Activated B cell treated with CpG ODN at 0.5 μM for 24 hours (primary cell): ENCODE measurements at regions of chr9 and their contacts with region 1.

Region 1: DNA sequence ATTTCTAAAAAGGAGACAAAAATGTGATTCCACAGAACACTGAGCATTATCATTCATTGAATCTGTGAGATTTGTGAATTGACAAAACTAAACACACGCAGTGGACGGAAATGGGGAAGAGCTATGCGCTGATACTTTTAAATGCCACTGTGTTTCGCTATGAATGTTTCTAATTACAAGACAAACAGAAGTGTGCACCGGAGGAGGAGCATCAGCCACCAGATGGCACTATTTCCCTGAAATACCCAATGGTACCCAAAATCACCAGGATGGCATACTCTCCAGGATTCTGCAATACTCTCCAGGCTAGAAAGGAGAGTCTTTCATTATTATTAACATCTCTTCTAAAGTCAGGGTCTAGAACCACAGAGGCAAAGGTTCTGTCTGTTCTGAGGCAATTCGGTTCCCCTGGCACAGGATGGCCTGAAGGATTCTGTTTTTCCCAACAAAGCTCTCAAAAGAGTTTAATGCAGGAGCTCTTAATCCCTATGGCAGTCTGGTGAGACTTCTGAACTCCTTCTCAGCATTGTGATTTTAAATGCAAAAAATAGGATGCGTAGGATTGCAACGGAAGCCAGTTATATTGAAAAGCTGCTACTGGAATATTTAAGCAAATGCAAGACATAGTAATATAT is 13.8 kb upstream of the PUM3 start:
- DNase-seq: no peak
- ATAC-seq: peak; percentile 88
- H3K4me3 Mint-ChIP-seq: no peak overlapping the region
- H3K27ac Mint-ChIP-seq: no peak overlapping the region
- H3K4me1 Mint-ChIP-seq: peaks cover 4% of the 10 kb centered on the region
- H3K27me3 Mint-ChIP-seq: peaks cover 34% of the 10 kb centered on the region
- CTCF ChIP-seq: no peak

Region 2: DNA sequence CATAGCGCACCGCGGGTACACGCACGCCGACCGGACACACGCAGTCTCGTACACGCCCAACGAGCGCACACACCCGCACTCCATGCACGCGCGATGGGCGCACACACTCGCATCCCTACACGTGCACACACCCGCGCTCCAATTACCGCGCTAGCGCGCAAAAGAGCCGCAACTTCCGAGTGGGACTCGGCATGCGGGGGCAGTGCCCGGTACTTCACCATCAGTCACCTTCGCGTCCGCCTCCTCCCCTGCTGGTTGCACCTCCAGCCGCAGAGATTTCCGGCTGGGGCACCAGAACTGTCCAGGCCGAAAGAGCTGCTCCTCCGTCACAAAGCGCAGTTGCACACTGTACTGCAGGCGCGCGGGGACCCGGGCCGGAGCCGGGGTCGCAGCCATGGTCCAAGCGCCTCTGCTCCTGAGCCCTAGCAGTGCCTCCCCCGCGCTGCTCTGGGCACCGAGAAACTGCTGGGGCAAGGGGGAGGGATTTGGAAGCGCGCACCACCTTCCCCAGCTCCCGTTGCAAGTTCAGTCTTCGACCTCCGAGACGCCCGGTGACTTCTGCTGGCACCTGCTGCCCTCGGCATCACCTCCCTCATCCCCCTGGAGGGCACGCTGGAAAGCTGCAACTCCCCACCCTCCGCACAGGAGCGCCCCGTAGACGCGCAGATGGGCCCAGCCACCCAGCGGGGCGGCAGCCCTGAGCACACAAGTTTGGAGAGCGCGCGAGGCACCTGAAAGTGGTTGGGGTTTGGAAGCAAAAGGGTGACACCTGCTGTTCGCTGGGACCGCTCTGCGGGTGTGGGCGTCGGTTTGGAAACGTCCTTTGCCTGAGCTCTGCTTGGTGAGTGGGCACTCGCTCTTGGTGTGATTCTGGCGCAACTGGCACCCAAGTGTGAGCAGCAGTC is 323.6 kb after region 1 on chr9:
- CTCF ChIA-PET with region 1: no interaction called
- POLR2A ChIA-PET with region 1: no interaction called
- intact Hi-C with region 1: loop called (anchors 2 kb)
- DNase-seq: no peak
- ATAC-seq: no peak
- H3K4me3 Mint-ChIP-seq: no peak overlapping the region
- H3K27ac Mint-ChIP-seq: no peak overlapping the region
- H3K4me1 Mint-ChIP-seq: peaks cover 5% of the 10 kb centered on the region
- H3K27me3 Mint-ChIP-seq: peaks cover 48% of the 10 kb centered on the region
- CTCF ChIP-seq: no peak

Region 3: DNA sequence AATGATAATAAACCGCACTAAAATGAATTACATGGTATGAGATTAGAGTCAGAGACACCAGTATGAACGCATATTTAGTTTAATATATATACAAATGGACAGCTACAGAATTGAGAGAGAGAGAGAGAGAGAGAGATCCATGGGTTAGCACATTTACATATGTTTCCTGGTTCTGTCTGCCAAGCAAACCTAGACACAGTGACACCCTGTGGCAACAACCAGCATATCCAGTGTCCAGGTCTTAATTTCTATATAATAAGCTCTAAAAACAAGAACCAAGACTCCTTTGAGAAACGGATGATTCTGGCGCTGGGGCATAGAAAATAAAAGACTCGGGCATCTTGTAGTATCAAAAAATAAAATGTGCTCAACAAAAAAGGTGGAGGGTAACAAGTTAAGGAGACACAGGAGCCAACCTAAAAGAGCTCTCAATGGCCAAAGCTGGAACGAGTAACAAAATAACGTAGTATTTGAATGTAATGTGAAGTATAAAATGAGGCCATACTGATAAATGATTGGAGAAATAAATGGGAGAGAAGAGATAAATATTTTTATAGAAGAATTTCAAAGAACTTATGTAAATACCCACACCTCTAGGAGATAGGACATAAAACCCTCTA is 583.6 kb after region 1 on chr9:
- CTCF ChIA-PET with region 1: interaction called, 4 read pairs
- POLR2A ChIA-PET with region 1: no interaction called
- intact Hi-C with region 1: loop called (anchors 1 kb)
- DNase-seq: no peak
- ATAC-seq: peak; percentile 92
- H3K4me3 Mint-ChIP-seq: no peak overlapping the region
- H3K27ac Mint-ChIP-seq: no peak overlapping the region
- H3K4me1 Mint-ChIP-seq: peaks cover 11% of the 10 kb centered on the region
- H3K27me3 Mint-ChIP-seq: no peaks in the 10 kb centered on the region
- CTCF ChIP-seq: no peak

Region 4: GRCh38 chr9:4228606-4229005 is 1370.9 kb after region 1 on chr9:
- CTCF ChIA-PET with region 1: no interaction called
- POLR2A ChIA-PET with region 1: no interaction called
- intact Hi-C with region 1: loop called (anchors 10 kb)
- DNase-seq: no peak
- ATAC-seq: no peak
- H3K4me3 Mint-ChIP-seq: no peak overlapping the region
- H3K27ac Mint-ChIP-seq: no peak overlapping the region
- H3K4me1 Mint-ChIP-seq: no peaks in the 10 kb centered on the region
- H3K27me3 Mint-ChIP-seq: no peaks in the 10 kb centered on the region
- CTCF ChIP-seq: no peak

Region 5: DNA sequence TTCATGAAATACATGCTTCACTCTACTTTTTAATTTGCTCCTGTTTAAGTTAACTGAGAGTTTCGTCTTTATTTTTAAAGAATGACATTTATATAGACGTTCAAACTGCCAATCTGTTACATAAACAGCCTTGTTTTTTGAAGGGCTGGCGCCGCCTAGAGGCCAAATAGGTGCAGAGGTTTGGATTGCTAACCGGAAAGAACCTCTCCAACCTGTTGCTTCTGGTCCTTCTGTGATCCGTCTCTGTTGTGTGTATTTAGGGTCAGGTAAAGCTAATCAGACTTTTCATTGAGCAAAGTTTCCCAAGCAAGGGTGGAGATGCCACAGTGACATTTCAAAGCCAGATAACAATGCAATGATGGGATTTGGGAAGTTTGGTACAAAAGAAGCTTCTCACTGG is 1481.7 kb after region 1 on chr9:
- CTCF ChIA-PET with region 1: interaction called, 16 read pairs
- POLR2A ChIA-PET with region 1: no interaction called
- intact Hi-C with region 1: loop called (anchors 1 kb)
- DNase-seq: peak; percentile 34
- ATAC-seq: peak; percentile 56
- H3K4me3 Mint-ChIP-seq: no peak overlapping the region
- H3K27ac Mint-ChIP-seq: no peak overlapping the region
- H3K4me1 Mint-ChIP-seq: peaks cover 2% of the 10 kb centered on the region
- H3K27me3 Mint-ChIP-seq: peaks cover 13% of the 10 kb centered on the region
- CTCF ChIP-seq: no peak

Region 6: DNA sequence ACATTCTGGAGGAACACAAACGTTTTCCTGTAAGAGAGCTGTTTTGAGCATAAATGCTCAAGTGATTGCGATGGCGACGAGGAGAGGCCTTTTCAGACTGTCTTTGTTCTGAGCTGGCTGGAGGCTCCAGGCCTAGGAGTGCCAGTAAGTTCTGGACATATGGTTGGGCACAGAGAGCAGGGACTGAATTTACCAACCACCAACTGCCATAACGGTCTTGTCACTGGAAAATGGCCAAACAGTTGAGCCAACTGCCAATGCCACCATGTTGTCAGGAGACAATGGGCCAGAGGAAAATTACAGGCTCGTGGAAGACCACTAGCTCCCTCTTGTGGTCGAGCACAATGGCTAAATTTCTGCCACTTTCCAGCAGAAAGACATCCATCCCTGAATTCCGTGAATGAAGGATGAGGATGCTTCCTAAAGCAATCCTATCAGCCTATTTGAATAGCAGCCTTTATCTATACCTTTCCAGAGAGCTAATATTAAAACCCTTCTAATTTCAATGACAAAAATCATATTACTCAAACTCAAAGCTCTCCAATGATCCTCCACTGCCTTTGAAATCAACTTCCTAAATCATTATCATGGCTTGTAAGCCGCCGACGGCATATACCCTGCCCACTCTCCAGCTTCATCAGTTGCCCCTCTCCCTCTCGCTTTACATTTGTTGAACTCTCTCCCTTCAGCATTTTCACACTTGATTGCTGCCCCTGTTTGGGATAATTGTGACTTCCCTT is 1509.1 kb after region 1 on chr9:
- CTCF ChIA-PET with region 1: interaction called, 11 read pairs
- POLR2A ChIA-PET with region 1: no interaction called
- intact Hi-C with region 1: loop called (anchors 1 kb)
- DNase-seq: no peak
- ATAC-seq: no peak
- H3K4me3 Mint-ChIP-seq: no peak overlapping the region
- H3K27ac Mint-ChIP-seq: no peak overlapping the region
- H3K4me1 Mint-ChIP-seq: no peaks in the 10 kb centered on the region
- H3K27me3 Mint-ChIP-seq: peaks cover 10% of the 10 kb centered on the region
- CTCF ChIP-seq: peak; percentile 31

Region 7: DNA sequence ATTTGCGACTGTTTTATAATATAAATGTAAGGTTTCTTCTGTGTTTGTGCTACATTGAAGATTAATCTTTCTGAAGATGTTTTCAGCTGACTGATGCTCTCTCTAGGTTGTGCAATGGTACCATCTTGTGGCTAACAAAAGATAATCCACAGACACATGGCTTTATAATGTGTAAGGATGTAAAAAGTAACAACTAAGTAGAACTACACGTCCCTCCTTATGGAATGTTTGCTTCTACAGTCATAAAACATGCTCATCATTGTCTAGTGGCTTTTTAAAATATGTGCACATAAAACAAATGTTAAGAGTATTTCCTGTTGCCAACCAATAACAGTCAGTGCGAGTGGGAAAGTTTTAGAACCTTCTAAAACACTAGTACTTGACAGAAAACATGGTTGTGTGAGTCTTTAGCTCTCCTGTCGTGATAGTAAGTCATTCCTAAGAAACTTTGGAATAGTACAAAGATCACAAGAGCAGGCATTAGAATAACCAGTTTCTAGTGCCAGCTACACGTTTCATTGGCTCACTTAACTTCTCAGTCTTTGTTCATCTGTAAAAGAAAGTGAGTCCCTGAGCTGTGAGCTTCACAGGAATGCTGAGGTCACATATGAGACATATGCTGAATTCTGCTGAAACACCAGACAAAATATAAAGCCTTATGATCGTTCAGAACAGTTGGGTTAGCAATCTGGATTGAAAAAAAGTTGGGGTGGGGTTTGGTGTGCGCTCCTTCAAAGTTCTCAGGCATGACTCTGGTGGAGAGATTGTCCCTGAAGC is 1517.9 kb after region 1 on chr9:
- CTCF ChIA-PET with region 1: no interaction called
- POLR2A ChIA-PET with region 1: no interaction called
- intact Hi-C with region 1: loop called (anchors 2 kb)
- DNase-seq: no peak
- ATAC-seq: no peak
- H3K4me3 Mint-ChIP-seq: no peak overlapping the region
- H3K27ac Mint-ChIP-seq: no peak overlapping the region
- H3K4me1 Mint-ChIP-seq: no peaks in the 10 kb centered on the region
- H3K27me3 Mint-ChIP-seq: peaks cover 13% of the 10 kb centered on the region
- CTCF ChIP-seq: no peak